Activated T-helper 2 cell treated with anti-CD3 and anti-CD28 coated beads, Interferon-gamma antibody, Interleukin-2, Interleukin-4, amounts not matched to agents 10 μg/mL and 5 μg/mL and 100 μg/mL, durations not matched to agents 14 hours and 24 hours and 36 hours (primary cell): ENCODE measurements at regions of chr6 and their contacts with region 1.

Region 1: GRCh38 chr6:45801471-45802289 is 214.0 kb downstream of the CLIC5 start:
- DNase-seq: peak; percentile 55
- H3K4me3 Mint-ChIP-seq: no peak overlapping the region
- H3K27ac Mint-ChIP-seq: peak overlapping the region; percentile 88
- H3K4me1 Mint-ChIP-seq: peaks cover 36% of the 10 kb centered on the region
- H3K27me3 Mint-ChIP-seq: no peaks in the 10 kb centered on the region

Region 2: GRCh38 chr6:44642870-44643529 is 1158.7 kb before region 1 on chr6:
- intact Hi-C with region 1: loop called (anchors 10 kb)
- DNase-seq: peak; percentile 39
- H3K4me3 Mint-ChIP-seq: no peak overlapping the region
- H3K27ac Mint-ChIP-seq: peak overlapping the region; percentile 91
- H3K4me1 Mint-ChIP-seq: peaks cover 31% of the 10 kb centered on the region
- H3K27me3 Mint-ChIP-seq: no peaks in the 10 kb centered on the region

Region 3: DNA sequence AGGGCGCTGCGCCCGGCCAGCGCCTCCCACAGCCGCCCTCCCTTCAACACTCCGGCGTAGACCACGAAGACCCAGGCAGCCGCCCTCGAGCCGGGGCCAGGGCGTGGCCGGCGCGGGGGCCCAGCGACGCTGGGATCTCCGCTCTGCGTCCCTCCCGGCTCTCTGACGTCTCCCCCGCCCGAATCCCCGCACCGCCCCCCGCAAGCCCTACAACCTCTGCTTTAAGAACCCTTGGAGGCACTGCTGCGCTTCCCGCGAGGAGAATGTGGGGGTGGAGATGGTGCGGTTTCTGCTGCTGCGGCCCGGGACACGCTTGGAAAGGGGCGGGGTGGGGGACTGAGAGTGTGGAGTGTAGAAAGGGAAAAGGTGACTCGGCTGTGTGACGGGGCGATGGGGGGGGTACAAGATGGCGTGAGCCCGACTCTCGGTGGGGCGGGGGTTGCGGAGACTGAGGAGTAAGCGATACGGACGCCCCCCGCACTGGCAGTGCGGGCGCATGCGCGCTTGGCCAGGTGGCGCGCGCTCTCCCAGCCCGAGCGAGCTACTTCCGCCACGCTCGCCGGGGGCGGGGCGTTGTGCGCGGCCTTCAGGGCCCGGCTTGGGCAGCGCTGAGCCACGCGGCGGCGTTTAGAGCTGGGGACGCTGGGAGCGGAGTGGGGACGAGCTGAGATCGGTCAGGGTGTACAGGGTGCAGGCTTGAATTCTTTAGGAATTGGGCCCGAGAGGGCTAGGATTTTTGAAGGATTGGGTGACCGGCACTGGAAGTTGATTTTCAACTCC is 423.9 kb before region 1 on chr6 and contains the start of gene SUPT3H:
- intact Hi-C with region 1: loop called (anchors 1 kb)
- DNase-seq: peak; percentile 89
- H3K4me3 Mint-ChIP-seq: peak within 1 kb of the TSS; percentile 99
- H3K27ac Mint-ChIP-seq: peak within 1 kb of the TSS; percentile 100
- H3K4me1 Mint-ChIP-seq: peaks cover 23% of the 10 kb centered on the region
- H3K27me3 Mint-ChIP-seq: no peaks in the 10 kb centered on the region
- total RNA-seq, gene SUPT3H: 14.8 and 19.4 TPM in 2 replicates

Region 4: GRCh38 chr6:45486736-45487135 is 314.9 kb before region 1 on chr6:
- intact Hi-C with region 1: loop called (anchors 5 kb)
- DNase-seq: no peak
- H3K4me3 Mint-ChIP-seq: peak overlapping the region; percentile 20
- H3K27ac Mint-ChIP-seq: peak overlapping the region; percentile 74
- H3K4me1 Mint-ChIP-seq: peaks cover 78% of the 10 kb centered on the region
- H3K27me3 Mint-ChIP-seq: no peaks in the 10 kb centered on the region

Region 5: GRCh38 chr6:45626087-45626891 is 175.4 kb before region 1 on chr6:
- intact Hi-C with region 1: loop called (anchors 1 kb)
- DNase-seq: no peak
- H3K4me3 Mint-ChIP-seq: no peak overlapping the region
- H3K27ac Mint-ChIP-seq: peak overlapping the region; percentile 86
- H3K4me1 Mint-ChIP-seq: peaks cover 61% of the 10 kb centered on the region
- H3K27me3 Mint-ChIP-seq: no peaks in the 10 kb centered on the region

Region 6: GRCh38 chr6:45759472-45759810 is 42.2 kb before region 1 on chr6:
- intact Hi-C with region 1: loop called (anchors 1 kb)
- DNase-seq: no peak
- H3K4me3 Mint-ChIP-seq: no peak overlapping the region
- H3K27ac Mint-ChIP-seq: peak overlapping the region; percentile 65
- H3K4me1 Mint-ChIP-seq: peaks cover 30% of the 10 kb centered on the region
- H3K27me3 Mint-ChIP-seq: no peaks in the 10 kb centered on the region

Region 7: GRCh38 chr6:45830441-45831139 is 28.9 kb after region 1 on chr6:
- intact Hi-C with region 1: loop called (anchors 1 kb)
- DNase-seq: peak; percentile 48
- H3K4me3 Mint-ChIP-seq: peak overlapping the region; percentile 79
- H3K27ac Mint-ChIP-seq: peak overlapping the region; percentile 94
- H3K4me1 Mint-ChIP-seq: peaks cover 61% of the 10 kb centered on the region
- H3K27me3 Mint-ChIP-seq: no peaks in the 10 kb centered on the region

Region 8: DNA sequence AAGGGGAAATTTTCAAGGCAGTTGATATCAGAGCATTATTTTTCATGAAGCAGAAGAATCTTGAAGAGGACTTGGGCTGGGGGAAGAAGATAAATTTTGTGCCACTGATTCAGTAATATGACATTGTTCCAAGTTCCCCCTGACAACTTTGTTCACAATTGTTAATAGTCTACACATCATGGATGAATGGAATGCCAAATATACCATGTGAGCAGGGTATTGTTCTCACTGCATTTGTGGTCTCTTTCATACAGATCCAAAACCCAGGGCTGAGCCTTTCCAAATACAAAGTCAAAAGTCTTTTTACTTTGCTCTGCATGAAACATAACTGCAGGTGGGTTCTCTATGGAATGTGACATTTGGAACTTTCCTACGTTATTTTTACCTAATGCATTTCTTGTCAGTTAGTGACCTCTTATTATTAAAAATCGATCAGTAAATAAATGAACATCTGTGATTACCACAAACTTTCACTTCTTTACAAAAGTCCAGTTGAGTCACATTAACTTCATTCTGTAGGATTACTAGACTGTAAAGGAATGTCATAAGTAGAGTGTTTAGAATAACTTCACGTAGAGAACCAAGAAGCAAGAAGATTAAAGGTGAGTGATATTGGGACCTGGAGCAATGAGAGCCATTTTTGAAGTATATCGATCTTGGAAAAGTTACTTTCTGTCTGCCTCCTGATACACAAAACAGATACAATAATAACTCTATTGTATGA is 588.6 kb after region 1 on chr6:
- intact Hi-C with region 1: no loop called
- DNase-seq: no peak
- H3K4me3 Mint-ChIP-seq: no peak overlapping the region
- H3K27ac Mint-ChIP-seq: no peak overlapping the region
- H3K4me1 Mint-ChIP-seq: no peaks in the 10 kb centered on the region
- H3K27me3 Mint-ChIP-seq: peaks cover 27% of the 10 kb centered on the region